ENCODE measurements at regions of chr2 and their contacts with region 1.

Region 1: DNA sequence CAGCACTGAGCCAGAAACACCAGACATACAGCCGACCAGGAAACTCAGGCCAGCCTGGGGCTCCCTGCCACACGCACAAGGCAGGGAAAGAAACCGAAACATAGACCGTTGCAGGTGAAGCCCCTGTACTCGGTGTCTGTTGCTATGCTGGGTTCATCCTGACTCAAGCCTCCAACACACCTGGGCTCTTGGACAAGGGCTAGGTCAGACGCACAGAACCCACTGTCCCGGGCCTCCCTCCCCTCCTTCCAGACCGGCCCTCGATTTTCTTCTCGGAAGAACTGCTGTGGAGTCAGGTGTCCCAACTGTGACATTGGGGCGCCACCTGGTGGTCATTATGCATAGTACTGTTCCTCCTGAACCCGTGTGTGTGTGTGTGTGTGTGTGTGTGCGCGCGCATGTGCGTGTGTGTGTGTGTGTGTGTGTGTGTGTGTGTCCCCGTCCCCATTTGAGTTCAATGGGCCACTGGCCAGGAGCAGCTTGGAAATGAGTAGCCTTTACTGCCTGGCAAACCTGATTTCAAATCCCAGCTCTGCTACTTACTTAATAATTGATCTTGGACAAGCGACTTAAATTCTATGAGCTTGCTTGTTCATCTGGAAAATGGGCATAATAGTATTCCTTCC is 55.4 kb upstream of the GLI2 start:
- DNase-seq: peak; percentile 87 to 94 (median 90)
- H3K4me3 ChIP-seq: no peak overlapping the region
- H3K27ac ChIP-seq: no peak overlapping the region
- H3K4me1 ChIP-seq: peaks cover 0 to 3% (median 0%) of the 10 kb centered on the region in 3 donors
- H3K27me3 ChIP-seq: peaks cover 7% of the 10 kb centered on the region
- CTCF ChIP-seq: peak; percentile 88

Region 2: DNA sequence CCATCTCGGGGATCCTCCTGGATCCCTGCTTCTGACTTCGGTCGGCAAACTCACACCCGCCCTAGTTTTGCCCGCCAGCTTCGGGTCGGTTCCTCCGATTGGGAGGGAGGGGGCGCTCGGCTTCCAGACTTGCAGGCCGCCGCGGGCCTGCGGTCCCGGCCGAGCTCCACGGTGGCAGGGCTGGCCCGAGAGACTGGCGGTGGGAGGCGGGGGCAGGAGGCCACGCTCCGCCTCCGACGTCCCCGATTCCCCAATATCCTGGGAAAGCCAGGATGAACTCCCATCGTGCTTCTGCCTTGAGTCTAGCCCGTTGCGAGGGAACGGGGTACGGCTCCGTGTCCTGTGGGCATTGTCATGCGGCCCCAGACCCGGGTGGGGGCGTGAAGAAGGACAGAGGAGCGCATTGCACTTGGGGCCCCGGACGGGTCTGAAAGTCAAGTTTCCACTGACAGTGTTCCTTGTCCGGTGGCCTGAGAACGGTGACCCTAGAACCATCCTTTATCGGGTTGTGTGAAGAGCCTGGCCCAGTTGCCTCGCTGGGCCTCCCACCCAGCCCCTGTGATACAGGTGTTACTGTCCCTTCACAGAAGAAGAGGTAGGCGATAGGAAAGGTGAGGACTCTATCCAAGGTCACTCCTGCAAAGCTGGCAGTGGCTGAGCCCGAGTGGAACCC is 336.7 kb before region 1 on chr2:
- intact Hi-C with region 1: loop called (anchors 5 kb)
- DNase-seq: peak; percentile 81 to 93 (median 83)
- H3K4me3 ChIP-seq: no peak overlapping the region
- H3K27ac ChIP-seq: no peak overlapping the region
- H3K4me1 ChIP-seq: peaks cover 0 to 12% (median 2%) of the 10 kb centered on the region in 3 donors
- H3K27me3 ChIP-seq: peaks cover 39% of the 10 kb centered on the region
- CTCF ChIP-seq: peak; percentile 84